ENCODE measurements at regions of chr3 and their contacts with region 1.

Region 1: GRCh38 chr3:185677146-185677829 is 91.2 kb downstream of the SENP2 start:
- DNase-seq: no peak
- ATAC-seq: peak; percentile 58 to 65
- H3K4me3 ChIP-seq: no peak overlapping the region
- H3K27ac ChIP-seq: no peak overlapping the region
- H3K4me1 ChIP-seq: no peaks in the 10 kb centered on the region
- H3K27me3 ChIP-seq: no peaks in the 10 kb centered on the region
- CTCF ChIP-seq: peak; percentile 67

Region 2: DNA sequence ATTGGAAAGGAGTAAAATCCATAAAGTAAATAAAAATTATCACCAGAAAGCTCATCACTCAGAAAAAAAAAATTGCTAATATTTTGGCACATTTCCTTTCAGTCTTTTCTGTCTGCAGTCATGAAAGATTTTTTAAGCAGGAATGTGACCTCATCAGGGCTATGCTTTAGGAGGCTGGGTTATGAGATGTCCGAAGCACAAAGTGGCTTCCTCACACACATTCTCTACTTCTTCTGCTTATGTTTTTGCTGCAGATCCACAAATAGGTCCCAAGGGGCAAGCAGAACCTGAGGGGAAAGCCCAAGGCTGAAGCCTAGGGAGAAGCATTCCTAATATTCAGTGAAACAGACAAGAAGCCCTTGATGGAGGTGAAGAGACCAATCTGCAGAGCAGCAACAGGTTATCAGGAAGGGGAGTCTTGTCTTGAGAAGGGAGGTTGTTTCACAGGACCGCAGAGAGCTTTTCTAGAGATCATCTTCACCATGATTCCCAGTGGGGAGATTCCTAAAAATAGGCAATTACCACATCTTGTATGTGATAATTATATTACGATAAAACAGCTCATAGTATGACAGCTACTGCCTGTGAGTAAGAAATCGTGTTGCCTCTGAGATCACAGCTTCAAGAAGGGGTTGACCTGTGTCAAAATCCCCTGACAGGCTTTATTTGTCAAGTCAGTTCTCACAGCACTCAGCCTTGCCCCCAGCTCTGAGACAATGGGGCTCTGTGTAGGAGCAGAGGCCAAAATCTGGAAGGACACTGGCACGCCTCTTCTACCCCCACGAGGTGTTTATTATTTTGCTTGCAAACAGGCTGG is 87.1 kb after region 1 on chr3:
- intact Hi-C with region 1: loop called (anchors 10 kb)
- DNase-seq: no peak
- ATAC-seq: peak; percentile 29 to 50
- H3K4me3 ChIP-seq: no peak overlapping the region
- H3K27ac ChIP-seq: peak overlapping the region; percentile 44
- H3K4me1 ChIP-seq: peaks cover 48% of the 10 kb centered on the region
- H3K27me3 ChIP-seq: no peaks in the 10 kb centered on the region
- CTCF ChIP-seq: no peak

Measured in lower lobe of right lung (tissue), 2 donors.